ENCODE measurements at regions of chr6 and their contacts with region 1.

Region 1: DNA sequence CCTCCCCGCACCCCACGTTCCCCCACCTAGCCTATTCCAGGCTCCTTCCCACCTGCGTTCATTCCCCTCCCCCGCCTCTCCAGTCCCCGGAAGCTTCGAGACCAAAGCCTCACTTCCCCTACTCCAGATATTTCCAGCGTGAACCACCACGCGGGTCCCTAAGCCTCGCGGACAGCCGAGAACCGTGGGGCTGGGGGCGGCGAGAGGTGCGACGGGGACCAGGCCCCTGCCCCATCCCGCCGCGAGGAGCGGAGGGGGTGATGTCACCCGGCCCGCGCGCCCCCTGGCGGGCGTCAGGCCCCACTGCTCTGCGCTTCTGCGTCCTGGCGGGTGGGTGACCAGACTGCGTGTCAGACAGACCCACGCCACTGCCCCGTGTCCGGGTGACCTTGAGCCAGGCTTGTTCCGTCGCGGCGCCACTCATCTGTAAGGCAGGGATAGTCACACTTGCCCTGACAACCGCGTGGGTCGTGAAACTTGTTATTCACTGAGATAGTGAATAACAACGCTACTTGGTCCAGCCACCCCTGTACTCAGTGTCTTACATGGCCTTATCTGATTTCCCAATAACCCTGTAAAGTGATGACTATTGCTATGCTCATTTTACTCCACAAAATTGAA is 9.0 kb upstream of the HSP90AB1 start:
- DNase-seq: peak; percentile 51
- ATAC-seq: peak; percentile 82
- H3K4me3 ChIP-seq: peak overlapping the region; percentile 53 to 78 (median 60); a peak in 5 of 6 replicates
- H3K27ac ChIP-seq: peak overlapping the region; percentile 57
- H3K4me1 ChIP-seq: peaks cover 69% of the 10 kb centered on the region
- H3K27me3 ChIP-seq: no peaks in the 10 kb centered on the region
- CTCF ChIP-seq: peak; percentile 95
- EP300 ChIP-seq: no peak
- POLR2A ChIP-seq: no peak
- RAD21 ChIP-seq: peak; percentile 85

Region 2: GRCh38 chr6:44113414-44113813 is 124.5 kb before region 1 on chr6:
- CTCF ChIA-PET with region 1: interaction called, 3 read pairs
- POLR2A ChIA-PET with region 1: interaction called, 5 read pairs
- in situ Hi-C with region 1: no loop called
- intact Hi-C with region 1: loop called (anchors 5 kb)
- DNase-seq: no peak
- ATAC-seq: peak; percentile 53
- H3K4me3 ChIP-seq: no peak overlapping the region
- H3K27ac ChIP-seq: peak overlapping the region; percentile 19
- H3K4me1 ChIP-seq: peaks cover 86% of the 10 kb centered on the region
- H3K27me3 ChIP-seq: no peaks in the 10 kb centered on the region
- CTCF ChIP-seq: peak; percentile 32; the same call in 1 of the 2 replicates
- EP300 ChIP-seq: no peak
- POLR2A ChIP-seq: no peak
- RAD21 ChIP-seq: peak; percentile 32; the same call in 1 of the 2 replicates

Region 3: DNA sequence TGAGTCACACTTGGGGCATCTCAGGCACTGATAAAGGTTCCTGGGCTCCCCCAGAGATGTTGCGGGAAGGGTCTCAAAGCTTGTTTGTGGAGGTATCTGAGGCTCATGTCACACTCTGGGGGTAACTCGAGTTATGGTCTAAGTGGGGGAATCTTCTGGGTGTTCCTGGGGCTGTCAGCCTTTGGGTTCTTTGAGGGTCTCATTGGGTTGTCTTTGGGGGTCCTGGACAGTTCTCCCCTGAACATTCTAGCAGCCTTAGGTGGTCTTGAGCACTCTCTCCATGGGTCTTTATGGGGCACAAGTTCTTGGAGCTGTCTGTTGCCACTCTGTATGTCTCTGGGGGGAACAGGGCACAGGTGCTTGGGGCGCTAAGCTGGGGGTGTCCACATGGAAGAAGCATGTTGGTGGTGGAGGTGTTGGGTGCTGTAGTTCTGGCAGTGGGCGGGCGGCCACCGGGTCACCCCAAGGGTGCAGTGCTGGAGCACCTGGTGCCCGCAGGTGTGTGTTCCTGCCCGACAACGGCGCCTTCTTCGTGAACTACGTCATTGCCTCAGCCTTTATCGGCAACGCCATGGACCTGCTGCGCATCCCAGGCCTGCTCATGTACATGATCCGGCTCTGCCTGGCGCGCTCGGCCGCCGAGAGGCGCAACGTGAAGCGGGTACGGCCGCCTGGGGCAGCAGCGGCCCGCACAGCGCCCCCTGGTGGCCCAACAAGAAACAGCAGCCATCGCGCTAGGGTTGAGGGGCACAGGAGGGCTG is 86.4 kb before region 1 on chr6:
- CTCF ChIA-PET with region 1: interaction called, 10 read pairs
- POLR2A ChIA-PET with region 1: interaction called, 8 read pairs
- in situ Hi-C with region 1: no loop called
- intact Hi-C with region 1: no loop called
- DNase-seq: peak; percentile 39
- ATAC-seq: peak; percentile 60
- H3K4me3 ChIP-seq: no peak overlapping the region
- H3K27ac ChIP-seq: no peak overlapping the region
- H3K4me1 ChIP-seq: peaks cover 30% of the 10 kb centered on the region
- H3K27me3 ChIP-seq: no peaks in the 10 kb centered on the region
- CTCF ChIP-seq: peak; percentile 100
- EP300 ChIP-seq: no peak
- POLR2A ChIP-seq: no peak
- RAD21 ChIP-seq: peak; percentile 99

Region 4: GRCh38 chr6:44172731-44173500 is 65.0 kb before region 1 on chr6:
- CTCF ChIA-PET with region 1: interaction called, 38 read pairs
- POLR2A ChIA-PET with region 1: interaction called, 14 read pairs
- in situ Hi-C with region 1: no loop called
- intact Hi-C with region 1: loop called (anchors 1 kb)
- DNase-seq: peak; percentile 67
- ATAC-seq: peak; percentile 82
- H3K4me3 ChIP-seq: peak overlapping the region in 1 of 3 experiments; percentile 13; a peak in 1 of 6 replicates
- H3K27ac ChIP-seq: no peak overlapping the region
- H3K4me1 ChIP-seq: peaks cover 58% of the 10 kb centered on the region
- H3K27me3 ChIP-seq: peaks cover 5 to 30% of the 10 kb centered on the region in 2 experiments; a peak in 3 of 5 replicates
- CTCF ChIP-seq: peak; percentile 99
- EP300 ChIP-seq: no peak
- POLR2A ChIP-seq: no peak
- RAD21 ChIP-seq: peak; percentile 95

Region 5: DNA sequence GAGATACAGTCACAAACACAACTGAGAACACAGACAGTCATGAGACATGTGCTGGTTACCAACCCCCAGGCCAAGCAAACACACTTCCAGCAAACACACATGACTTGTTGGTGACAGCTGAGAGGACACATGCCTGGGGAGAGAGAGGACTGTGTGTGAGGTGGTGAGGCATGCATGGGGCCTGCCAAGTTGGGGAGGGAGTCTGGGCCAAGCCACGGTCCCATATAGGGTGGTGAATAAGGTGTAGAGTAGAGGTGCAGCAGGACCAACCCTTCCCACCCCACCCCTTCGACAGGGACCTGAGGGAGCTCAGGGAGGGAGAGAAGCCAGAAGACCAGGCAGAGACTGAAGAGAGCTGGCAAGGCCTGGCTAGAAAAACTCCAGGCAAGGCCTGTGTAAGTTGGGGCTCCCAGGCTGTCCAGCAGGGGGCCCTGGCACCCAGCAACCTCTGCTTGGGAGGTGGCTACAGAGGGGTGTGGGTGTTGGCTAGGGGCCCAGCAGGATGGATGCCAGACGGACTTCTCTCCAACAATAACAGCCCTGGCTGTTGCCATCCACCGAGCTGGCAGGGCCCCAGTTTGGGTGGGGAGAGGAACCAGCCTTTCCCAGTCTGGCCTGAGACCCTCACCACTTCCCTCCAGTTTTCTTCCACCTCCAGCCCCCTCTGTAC is 16.5 kb before region 1 on chr6:
- CTCF ChIA-PET with region 1: interaction called, 18 read pairs
- POLR2A ChIA-PET with region 1: interaction called, 20 read pairs
- in situ Hi-C with region 1: no loop called
- intact Hi-C with region 1: loop called (anchors 1 kb)
- DNase-seq: peak; percentile 85
- ATAC-seq: peak; percentile 70
- H3K4me3 ChIP-seq: peak overlapping the region in 1 of 3 experiments; percentile 36; a peak in 1 of 6 replicates
- H3K27ac ChIP-seq: no peak overlapping the region
- H3K4me1 ChIP-seq: peaks cover 87% of the 10 kb centered on the region
- H3K27me3 ChIP-seq: peaks cover 1 to 9% of the 10 kb centered on the region in 2 experiments; a peak in 3 of 5 replicates
- CTCF ChIP-seq: peak; percentile 91
- EP300 ChIP-seq: peak in 1 of 2 experiments; percentile 12; a peak in 1 of 4 replicates
- POLR2A ChIP-seq: no peak
- RAD21 ChIP-seq: peak; percentile 86

Region 6: GRCh38 chr6:44257025-44257752 is 19.3 kb after region 1 on chr6 and contains the start of gene SLC35B2:
- CTCF ChIA-PET with region 1: no interaction called
- POLR2A ChIA-PET with region 1: interaction called, 264 read pairs
- in situ Hi-C with region 1: no loop called
- intact Hi-C with region 1: no loop called
- DNase-seq: peak; percentile 88
- ATAC-seq: peak; percentile 71
- H3K4me3 ChIP-seq: peak within 1 kb of the TSS; percentile 66 to 84 (median 71)
- H3K27ac ChIP-seq: peak within 1 kb of the TSS; percentile 93
- H3K4me1 ChIP-seq: peaks cover 53% of the 10 kb centered on the region
- H3K27me3 ChIP-seq: no peaks in the 10 kb centered on the region; a peak in 1 of 5 replicates
- CTCF ChIP-seq: peak; percentile 73
- EP300 ChIP-seq: peak in 1 of 2 experiments; percentile 10; a peak in 1 of 4 replicates
- POLR2A ChIP-seq: peak in 1 of 2 experiments; percentile 70; a peak in 2 of 4 replicates
- RAD21 ChIP-seq: no peak
- total RNA-seq, gene SLC35B2: 34.9 and 61.1 TPM in 2 replicates

Region 7: DNA sequence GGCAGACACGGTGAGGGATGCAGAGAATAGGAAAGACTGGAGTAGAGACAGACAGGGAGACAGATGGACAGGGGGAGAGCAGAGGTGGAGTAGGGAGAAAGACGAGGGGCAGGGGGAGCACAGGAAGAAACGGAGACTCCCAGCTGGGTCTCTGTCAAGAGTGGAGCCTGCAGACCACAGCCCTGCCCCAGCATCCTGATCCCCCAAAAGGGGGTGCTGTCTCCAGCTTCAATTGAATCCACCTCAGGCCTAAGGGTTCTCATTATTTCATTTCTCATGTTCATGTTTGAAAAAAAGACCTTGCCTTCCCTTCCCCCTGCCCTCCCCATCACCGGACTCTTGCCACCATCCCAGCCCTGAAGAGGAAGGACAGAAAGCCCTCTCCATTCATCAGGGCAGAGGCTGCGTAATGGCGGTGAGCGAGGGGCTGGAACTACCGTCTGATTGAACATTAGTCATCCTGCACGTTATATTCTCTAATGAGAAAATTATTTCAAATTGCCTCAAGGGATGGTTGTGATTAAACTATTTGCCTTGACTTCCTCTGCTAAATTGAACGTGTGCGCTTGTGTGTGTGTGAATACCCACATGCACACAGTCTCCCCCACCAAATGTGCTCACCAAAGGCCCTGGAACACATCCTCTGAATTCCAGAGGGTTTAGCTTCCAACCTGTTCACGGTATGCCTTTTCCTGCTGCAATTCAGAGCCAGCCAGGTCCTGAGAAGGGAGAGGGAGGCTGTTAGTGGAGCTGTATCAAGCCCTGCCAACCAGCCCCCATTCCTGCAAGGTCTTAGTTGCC is 247.9 kb after region 1 on chr6:
- CTCF ChIA-PET with region 1: no interaction called
- POLR2A ChIA-PET with region 1: no interaction called
- in situ Hi-C with region 1: no loop called
- intact Hi-C with region 1: no loop called
- DNase-seq: no peak
- ATAC-seq: no peak
- H3K4me3 ChIP-seq: no peak overlapping the region
- H3K27ac ChIP-seq: no peak overlapping the region
- H3K4me1 ChIP-seq: no peaks in the 10 kb centered on the region
- H3K27me3 ChIP-seq: peaks cover 0 to 37% of the 10 kb centered on the region in 2 experiments; a peak in 4 of 5 replicates
- CTCF ChIP-seq: no peak
- EP300 ChIP-seq: no peak
- POLR2A ChIP-seq: no peak
- RAD21 ChIP-seq: no peak